Cardiac septum (tissue), 1 donor: ENCODE measurements at regions of chr2 and their contacts with region 1.

Region 1: GRCh38 chr2:124704071-124704925 is 679.2 kb downstream of the CNTNAP5 start:
- DNase-seq: no peak

Region 2: DNA sequence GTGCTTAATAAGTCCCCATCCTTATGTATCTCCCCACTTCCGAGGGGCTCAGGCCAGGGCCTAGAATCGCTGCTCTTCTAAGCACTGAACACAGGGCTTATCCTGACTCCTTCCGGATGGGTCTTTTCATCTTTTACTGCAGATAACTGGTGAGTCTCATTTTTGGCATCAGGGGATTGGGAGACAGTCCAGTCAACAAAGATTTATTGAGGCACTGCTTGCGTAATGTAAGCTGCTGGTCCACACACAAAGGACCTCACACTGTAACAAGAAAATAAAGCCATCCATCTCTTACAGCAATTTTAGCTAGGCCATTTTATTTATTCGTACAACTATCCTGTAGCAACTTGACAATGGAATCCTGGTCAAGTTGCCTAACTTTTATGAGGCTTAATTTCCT is 78.7 kb before region 1 on chr2:
- intact Hi-C with region 1: no loop called
- DNase-seq: no peak

Region 3: GRCh38 chr2:124692707-124693106 is 11.6 kb before region 1 on chr2:
- intact Hi-C with region 1: loop called (anchors 2 kb)
- DNase-seq: no peak

Region 4: GRCh38 chr2:124983595-124983994 is 279.3 kb after region 1 on chr2:
- intact Hi-C with region 1: no loop called
- DNase-seq: no peak